ENCODE measurements at regions of chr15 and their contacts with region 1.

Region 1: DNA sequence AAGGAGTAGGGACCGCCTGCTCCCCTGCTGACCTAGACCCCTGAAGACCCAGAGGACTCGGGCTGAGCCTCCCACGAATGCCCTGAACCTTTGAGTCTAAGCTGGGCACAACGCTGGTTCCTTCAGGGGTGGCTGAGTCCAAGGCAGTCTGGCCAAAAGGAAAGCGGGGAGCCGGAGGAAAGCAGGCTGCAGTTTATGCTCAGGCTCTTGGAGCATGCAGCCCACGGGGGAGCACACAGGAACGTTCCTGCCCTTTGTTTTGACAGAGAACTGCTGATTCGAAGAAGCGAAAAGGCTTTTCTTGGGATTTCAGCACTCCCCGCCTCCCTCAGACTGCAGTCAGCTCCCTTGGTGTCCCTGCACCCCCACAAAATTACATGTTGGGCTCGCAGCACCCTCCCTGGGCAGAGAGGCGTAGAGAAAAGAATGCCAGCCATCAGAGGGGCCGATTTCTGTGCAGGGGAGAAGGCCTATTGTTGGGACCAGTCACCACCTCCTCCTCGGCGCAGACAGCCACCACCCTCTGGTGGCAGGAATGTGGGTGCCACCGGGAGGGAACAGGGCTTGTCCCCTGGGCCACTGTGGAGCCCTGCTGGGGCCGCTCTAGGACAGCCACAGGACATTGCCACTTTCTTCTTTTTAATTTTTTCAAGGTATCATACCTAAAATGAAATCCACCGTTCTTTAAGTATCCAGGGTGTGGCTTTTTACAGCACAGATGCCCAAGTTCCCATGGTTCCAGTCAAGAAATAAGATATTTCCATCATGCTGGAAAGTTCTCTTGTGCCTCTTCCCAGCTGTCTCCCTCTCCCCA is 72.2 kb downstream of the SMAD6 start:
- DNase-seq: peak; percentile 44 to 95
- H3K4me3 ChIP-seq: no peak overlapping the region
- H3K27ac ChIP-seq: peak overlapping the region; percentile 75 to 77
- H3K4me1 ChIP-seq: peaks cover 14 to 47% of the 10 kb centered on the region in 2 donors
- H3K27me3 ChIP-seq: no peaks in the 10 kb centered on the region
- CTCF ChIP-seq: peak; percentile 96 to 99 (median 99)

Region 2: GRCh38 chr15:66603301-66604179 is 170.7 kb before region 1 on chr15:
- intact Hi-C with region 1: loop called (anchors 2 kb)
- DNase-seq: peak in 1 of 2 donors; percentile 75
- H3K4me3 ChIP-seq: no peak overlapping the region
- H3K27ac ChIP-seq: no peak overlapping the region
- H3K4me1 ChIP-seq: peaks cover 0 to 3% of the 10 kb centered on the region in 2 donors
- H3K27me3 ChIP-seq: no peaks in the 10 kb centered on the region
- CTCF ChIP-seq: peak; percentile 78 to 90 (median 80)

Region 3: DNA sequence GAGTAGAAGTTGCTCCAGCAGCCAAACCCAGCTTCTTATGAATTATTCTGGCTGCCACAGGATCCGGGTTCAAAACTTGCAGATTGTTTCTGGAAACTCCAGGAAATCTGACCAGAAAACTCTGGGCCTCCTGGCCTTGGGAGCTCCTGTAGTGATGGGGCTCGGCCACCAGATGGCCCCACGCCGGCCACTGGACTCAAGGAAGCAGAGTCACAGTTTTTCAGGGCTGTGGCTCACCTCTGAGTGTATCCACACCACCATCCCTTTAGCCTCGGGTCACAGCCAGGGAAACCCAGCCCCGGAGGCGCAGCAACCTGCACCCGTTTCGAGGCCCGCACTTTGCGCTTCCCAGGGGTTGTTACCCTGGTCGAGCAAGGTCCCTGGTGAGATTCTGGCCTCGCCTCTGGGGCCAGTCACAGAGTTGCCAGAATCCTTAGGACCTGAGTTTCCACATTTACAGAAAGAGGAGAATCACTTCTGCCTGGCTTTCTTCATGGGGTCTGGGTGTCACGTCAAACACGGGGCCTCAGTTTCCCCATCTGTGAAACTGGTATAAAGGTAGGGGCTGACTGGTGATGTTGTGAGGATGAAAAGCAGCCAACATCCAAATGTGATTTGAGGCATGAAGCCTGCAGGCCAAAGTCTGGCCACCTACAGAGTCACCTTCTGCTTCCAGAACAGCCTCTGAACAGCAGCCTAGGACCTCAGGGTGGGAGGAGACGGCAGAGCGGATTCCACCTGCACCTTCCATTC is 154.9 kb before region 1 on chr15:
- intact Hi-C with region 1: loop called (anchors 2 kb)
- DNase-seq: peak in 1 of 2 donors; percentile 89
- H3K4me3 ChIP-seq: no peak overlapping the region
- H3K27ac ChIP-seq: peak overlapping the region; percentile 94
- H3K4me1 ChIP-seq: peaks cover 25 to 46% of the 10 kb centered on the region in 2 donors
- H3K27me3 ChIP-seq: no peaks in the 10 kb centered on the region
- CTCF ChIP-seq: peak; percentile 85 to 96 (median 92)

Region 4: DNA sequence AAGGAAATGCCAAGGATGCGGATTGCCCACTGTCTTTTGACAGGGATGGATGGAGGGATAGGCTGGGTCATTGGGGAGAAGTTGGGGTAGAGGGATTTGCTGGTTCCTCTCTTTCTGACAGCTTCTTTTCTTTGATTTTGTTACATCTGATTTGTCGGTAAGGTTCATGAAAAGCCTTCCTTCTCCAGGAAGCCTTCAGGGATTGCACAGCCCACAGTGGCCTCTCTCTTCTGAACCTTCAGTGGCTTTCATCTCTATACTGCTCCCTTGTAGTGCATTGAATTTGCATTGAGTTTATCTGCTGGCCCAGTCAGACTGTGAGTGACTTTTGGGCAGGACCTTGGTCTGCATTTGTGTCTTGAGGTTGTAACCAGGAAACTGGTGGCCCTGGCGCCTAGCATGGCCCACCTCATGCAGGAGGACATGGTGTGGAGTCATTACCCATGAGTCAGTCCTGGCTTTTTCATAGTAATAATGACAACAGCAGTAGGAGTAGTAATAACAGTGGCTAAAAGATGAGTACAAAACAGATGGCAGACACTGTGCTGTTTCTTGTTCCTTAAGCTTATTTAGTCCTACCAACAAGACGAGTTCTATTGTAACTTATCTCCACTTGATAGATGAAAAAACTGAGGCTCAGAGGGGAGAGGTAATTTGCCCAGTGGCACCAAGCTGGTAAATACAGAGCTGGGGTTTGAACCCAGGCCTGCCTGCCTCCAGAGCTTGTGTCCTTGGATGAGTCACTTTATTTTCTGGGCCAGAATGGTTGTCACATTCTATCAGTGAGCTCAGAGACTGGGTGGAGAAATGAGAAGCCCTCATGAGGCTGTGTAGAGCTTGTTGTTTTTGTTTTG is 43.8 kb before region 1 on chr15:
- intact Hi-C with region 1: no loop called
- DNase-seq: peak in 1 of 2 donors; percentile 79
- H3K4me3 ChIP-seq: peak overlapping the region in 1 of 2 donors; percentile 53
- H3K27ac ChIP-seq: peak overlapping the region; percentile 82 to 84
- H3K4me1 ChIP-seq: peaks cover 13 to 52% of the 10 kb centered on the region in 2 donors
- H3K27me3 ChIP-seq: no peaks in the 10 kb centered on the region
- CTCF ChIP-seq: no peak

Region 5: GRCh38 chr15:66803182-66803729 is 29.0 kb after region 1 on chr15:
- intact Hi-C with region 1: loop called (anchors 2 kb)
- DNase-seq: peak; percentile 75 to 97
- H3K4me3 ChIP-seq: no peak overlapping the region
- H3K27ac ChIP-seq: peak overlapping the region; percentile 83 to 94
- H3K4me1 ChIP-seq: peaks cover 15 to 29% of the 10 kb centered on the region in 2 donors
- H3K27me3 ChIP-seq: no peaks in the 10 kb centered on the region
- CTCF ChIP-seq: no peak

Measured in ascending aorta (tissue), 2 donors.